Breast epithelium (tissue), 4 donors: ENCODE measurements at regions of chr7 and their contacts with region 1.

Region 1: GRCh38 chr7:156061689-156062255 is 249.5 kb upstream of the SHH start:
- DNase-seq: no peak
- H3K4me3 ChIP-seq: no peak overlapping the region
- H3K27ac ChIP-seq: no peak overlapping the region
- H3K4me1 ChIP-seq: no peaks in the 10 kb centered on the region
- H3K27me3 ChIP-seq: peaks cover 0 to 8% of the 10 kb centered on the region in 2 donors
- CTCF ChIP-seq: no peak
- POLR2A ChIP-seq: no peak

Region 2: DNA sequence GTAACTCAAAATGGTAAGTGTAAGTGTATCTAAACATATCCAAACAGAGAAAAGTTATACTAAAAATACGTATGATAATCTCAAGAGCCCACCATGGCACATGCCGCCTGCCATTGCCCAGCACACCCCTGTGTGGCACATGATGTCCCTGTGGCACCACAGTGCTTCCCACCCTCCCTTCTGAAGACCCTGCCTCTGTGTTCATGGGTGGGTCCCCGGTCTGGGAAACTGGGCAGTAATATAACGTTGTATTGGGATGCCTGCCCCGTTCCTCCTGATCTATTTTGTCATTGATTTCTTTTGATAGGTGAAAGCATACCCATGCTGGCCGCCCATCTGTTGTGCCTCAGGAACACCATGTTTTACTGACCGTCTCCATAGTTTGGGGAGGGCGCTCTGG is 47.3 kb after region 1 on chr7:
- intact Hi-C with region 1: loop called (anchors 1 kb)
- DNase-seq: no peak
- H3K4me3 ChIP-seq: no peak overlapping the region
- H3K27ac ChIP-seq: no peak overlapping the region
- H3K4me1 ChIP-seq: no peaks in the 10 kb centered on the region
- H3K27me3 ChIP-seq: peaks cover 0 to 4% of the 10 kb centered on the region in 2 donors
- CTCF ChIP-seq: no peak
- POLR2A ChIP-seq: no peak

Region 3: GRCh38 chr7:156223935-156224832 is 162.4 kb after region 1 on chr7:
- intact Hi-C with region 1: no loop called
- DNase-seq: no peak
- H3K4me3 ChIP-seq: no peak overlapping the region
- H3K27ac ChIP-seq: no peak overlapping the region
- H3K4me1 ChIP-seq: no peaks in the 10 kb centered on the region
- H3K27me3 ChIP-seq: peaks cover 0 to 5% of the 10 kb centered on the region in 2 donors
- CTCF ChIP-seq: no peak
- POLR2A ChIP-seq: no peak